Stomach (tissue), 19 donors: ENCODE measurements at regions of chr10 and their contacts with region 1.

Region 1: GRCh38 chr10:116688241-116688711 is 54.1 kb downstream of the HSPA12A start:
- DNase-seq: peak in 1 of 2 donors; percentile 54
- H3K4me3 ChIP-seq: no peak overlapping the region
- H3K27ac ChIP-seq: peak overlapping the region in 2 of 5 donors; percentile 4 to 37
- H3K4me1 ChIP-seq: peaks cover 0 to 29% (median 12%) of the 10 kb centered on the region in 4 donors
- H3K27me3 ChIP-seq: no peaks in the 10 kb centered on the region
- CTCF ChIP-seq: no peak
- EP300 ChIP-seq: no peak
- POLR2A ChIP-seq: no peak

Region 2: DNA sequence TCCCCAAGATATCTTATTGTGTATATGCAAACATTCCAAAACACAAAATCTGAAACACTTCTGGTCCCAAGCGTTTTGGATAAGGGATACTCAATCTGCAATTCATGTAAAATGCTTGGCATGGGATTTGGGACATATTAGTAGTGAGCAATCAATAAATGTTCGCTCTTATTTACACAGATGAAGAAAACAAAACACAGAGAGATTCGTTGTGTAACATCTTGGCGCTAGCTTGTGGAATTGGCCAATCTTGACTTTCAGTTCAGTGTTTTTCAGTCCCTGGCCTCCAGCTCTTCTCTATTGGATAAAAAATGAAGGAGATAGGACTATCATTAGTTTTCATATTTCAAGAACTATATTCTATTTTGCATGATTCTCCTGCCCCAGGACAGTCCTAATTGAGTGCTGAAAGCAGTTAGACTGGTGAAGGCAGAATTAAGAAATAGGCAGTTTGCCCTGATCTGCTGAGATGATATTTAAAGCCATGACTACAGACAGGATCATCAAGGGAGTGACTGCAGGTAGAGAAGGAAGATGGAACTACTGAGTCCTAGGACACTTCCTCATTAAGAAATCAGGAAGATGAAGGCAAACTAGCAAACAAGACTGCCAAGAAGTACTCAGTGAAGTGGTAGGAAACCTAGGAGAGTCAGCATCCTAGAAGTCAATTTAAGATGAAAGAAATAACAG is 258.8 kb before region 1 on chr10:
- intact Hi-C with region 1: no loop called
- DNase-seq: no peak
- H3K4me3 ChIP-seq: no peak overlapping the region
- H3K27ac ChIP-seq: no peak overlapping the region
- H3K4me1 ChIP-seq: no peaks in the 10 kb centered on the region
- H3K27me3 ChIP-seq: no peaks in the 10 kb centered on the region
- CTCF ChIP-seq: no peak
- EP300 ChIP-seq: no peak
- POLR2A ChIP-seq: no peak

Region 3: DNA sequence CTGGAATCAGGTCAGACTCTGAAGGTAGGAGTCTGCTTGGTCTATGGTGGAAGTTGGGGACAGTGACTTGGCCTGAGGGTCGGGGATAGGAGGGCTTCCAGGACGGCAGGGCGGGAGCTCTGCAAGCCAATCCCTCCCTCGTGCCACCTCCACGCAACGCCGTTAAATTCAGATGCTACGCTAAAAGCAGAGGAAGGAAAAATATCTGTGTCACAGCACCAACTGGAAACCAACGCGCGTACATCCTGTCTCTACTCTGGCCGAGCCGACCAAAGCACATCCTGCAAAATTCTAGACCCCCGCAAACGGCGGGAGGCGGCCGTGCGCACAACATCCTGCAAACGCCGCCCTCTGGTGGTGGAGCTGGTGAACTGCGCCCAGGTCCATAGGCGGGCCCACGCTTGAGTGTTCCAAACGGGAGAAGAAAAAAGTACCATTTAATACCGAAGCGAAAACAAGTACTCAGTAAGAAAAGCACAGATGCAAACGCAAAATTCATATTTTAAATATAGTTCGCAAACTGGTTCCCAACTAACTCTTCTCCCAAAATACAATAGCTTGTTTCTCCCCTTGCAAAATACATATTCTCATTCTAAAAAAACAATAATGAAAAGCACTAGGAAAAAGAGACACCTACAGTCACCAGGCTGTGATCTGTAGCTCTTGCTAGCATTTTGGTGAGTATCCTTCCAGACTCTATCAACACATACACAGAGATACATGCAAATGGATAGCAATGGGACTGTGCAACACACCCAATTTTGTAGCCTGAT is 99.8 kb after region 1 on chr10:
- intact Hi-C with region 1: loop called (anchors 5 kb)
- DNase-seq: peak; percentile 74 to 92
- H3K4me3 ChIP-seq: peak overlapping the region; percentile 17 to 28 (median 22)
- H3K27ac ChIP-seq: no peak overlapping the region
- H3K4me1 ChIP-seq: peaks cover 6 to 10% (median 7%) of the 10 kb centered on the region in 4 donors
- H3K27me3 ChIP-seq: peaks cover 0 to 19% (median 6%) of the 10 kb centered on the region in 3 donors
- CTCF ChIP-seq: peak in 6 of 7 experiments; percentile 51 to 100 (median 96)
- EP300 ChIP-seq: no peak
- POLR2A ChIP-seq: no peak

Region 4: GRCh38 chr10:117174439-117175214 is 486.4 kb after region 1 on chr10:
- intact Hi-C with region 1: loop called (anchors 5 kb)
- DNase-seq: peak; percentile 81 to 93
- H3K4me3 ChIP-seq: peak overlapping the region; percentile 38 to 68 (median 51)
- H3K27ac ChIP-seq: no peak overlapping the region
- H3K4me1 ChIP-seq: peaks cover 8 to 17% (median 13%) of the 10 kb centered on the region in 4 donors
- H3K27me3 ChIP-seq: peaks cover 0 to 73% (median 37%) of the 10 kb centered on the region in 3 donors
- CTCF ChIP-seq: peak in 5 of 7 experiments; percentile 70 to 89 (median 79)
- EP300 ChIP-seq: no peak
- POLR2A ChIP-seq: no peak